ENCODE measurements at regions of chr11 and their contacts with region 1.

Region 1: GRCh38 chr11:3767536-3767935 is 29.8 kb downstream of the NUP98 start:
- DNase-seq: no peak
- H3K4me3 ChIP-seq: no peak overlapping the region
- H3K4me1 ChIP-seq: no peaks in the 10 kb centered on the region
- H3K27me3 ChIP-seq: no peaks in the 10 kb centered on the region

Region 2: DNA sequence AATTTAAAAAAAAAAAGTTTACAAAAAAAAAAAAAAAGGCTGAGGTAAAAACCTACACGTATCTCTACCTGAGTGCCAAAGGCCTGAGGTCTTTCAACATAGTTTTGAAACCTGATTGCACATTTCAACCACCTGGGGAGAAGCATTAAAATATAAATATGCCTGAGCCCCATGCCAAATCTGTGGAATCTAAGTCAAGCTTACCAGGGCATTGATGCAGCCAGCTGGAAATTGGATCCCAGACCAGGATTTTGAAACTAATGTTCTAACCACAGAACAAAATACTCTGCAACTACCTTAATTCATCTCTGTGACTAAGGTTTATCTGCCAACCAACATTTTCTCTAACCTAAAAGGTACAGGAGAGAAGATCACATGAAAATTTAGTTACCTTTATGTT is 57.6 kb before region 1 on chr11:
- in situ Hi-C with region 1: loop called (anchors 10 kb)
- DNase-seq: no peak
- H3K4me3 ChIP-seq: no peak overlapping the region
- H3K4me1 ChIP-seq: no peaks in the 10 kb centered on the region
- H3K27me3 ChIP-seq: no peaks in the 10 kb centered on the region

Measured in HAP-1 (cell line).